CD4-positive, alpha-beta memory T cell (primary cell): ENCODE measurements at regions of chr7 and their contacts with region 1.

Region 1: DNA sequence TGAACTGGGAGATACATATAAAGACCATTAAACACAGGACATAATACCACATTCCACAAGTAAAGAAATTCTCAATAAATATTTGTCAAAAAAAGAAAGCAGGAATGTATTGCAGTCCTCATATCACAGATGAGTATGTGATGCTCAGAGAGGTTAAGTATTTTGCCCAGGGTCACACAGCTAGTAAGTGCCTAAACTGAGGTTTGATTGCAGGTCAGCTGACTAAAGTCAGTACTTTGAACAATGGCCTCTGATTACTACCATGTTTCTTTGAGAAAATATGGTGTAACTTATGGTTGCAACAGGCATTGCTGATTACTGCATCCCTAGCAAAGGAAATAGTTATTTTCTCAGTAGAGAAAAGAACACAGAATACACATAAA is 267.1 kb downstream of the ELMO1 start:
- DNase-seq: no peak
- H3K4me3 ChIP-seq: no peak overlapping the region
- H3K4me3 Mint-ChIP-seq: no peak overlapping the region
- H3K27ac ChIP-seq: no peak overlapping the region
- H3K27ac Mint-ChIP-seq: peak overlapping the region in 1 of 7 donors; percentile 47
- H3K4me1 ChIP-seq: no peaks in the 10 kb centered on the region
- H3K4me1 Mint-ChIP-seq: peaks cover 3 to 12% (median 6%) of the 10 kb centered on the region in 4 donors
- H3K27me3 ChIP-seq: no peaks in the 10 kb centered on the region
- H3K27me3 Mint-ChIP-seq: no peaks in the 10 kb centered on the region

Region 2: GRCh38 chr7:36473454-36474282 is 707.9 kb before region 1 on chr7:
- CTCF ChIA-PET with region 1: interaction called, 18 read pairs
- POLR2A ChIA-PET with region 1: no interaction called
- intact Hi-C with region 1: no loop called
- DNase-seq: no peak
- H3K4me3 ChIP-seq: no peak overlapping the region
- H3K4me3 Mint-ChIP-seq: no peak overlapping the region
- H3K27ac ChIP-seq: no peak overlapping the region
- H3K27ac Mint-ChIP-seq: no peak overlapping the region
- H3K4me1 ChIP-seq: peaks cover 5% of the 10 kb centered on the region
- H3K4me1 Mint-ChIP-seq: peaks cover 0 to 9% (median 3%) of the 10 kb centered on the region in 4 donors
- H3K27me3 ChIP-seq: no peaks in the 10 kb centered on the region
- H3K27me3 Mint-ChIP-seq: no peaks in the 10 kb centered on the region

Region 3: DNA sequence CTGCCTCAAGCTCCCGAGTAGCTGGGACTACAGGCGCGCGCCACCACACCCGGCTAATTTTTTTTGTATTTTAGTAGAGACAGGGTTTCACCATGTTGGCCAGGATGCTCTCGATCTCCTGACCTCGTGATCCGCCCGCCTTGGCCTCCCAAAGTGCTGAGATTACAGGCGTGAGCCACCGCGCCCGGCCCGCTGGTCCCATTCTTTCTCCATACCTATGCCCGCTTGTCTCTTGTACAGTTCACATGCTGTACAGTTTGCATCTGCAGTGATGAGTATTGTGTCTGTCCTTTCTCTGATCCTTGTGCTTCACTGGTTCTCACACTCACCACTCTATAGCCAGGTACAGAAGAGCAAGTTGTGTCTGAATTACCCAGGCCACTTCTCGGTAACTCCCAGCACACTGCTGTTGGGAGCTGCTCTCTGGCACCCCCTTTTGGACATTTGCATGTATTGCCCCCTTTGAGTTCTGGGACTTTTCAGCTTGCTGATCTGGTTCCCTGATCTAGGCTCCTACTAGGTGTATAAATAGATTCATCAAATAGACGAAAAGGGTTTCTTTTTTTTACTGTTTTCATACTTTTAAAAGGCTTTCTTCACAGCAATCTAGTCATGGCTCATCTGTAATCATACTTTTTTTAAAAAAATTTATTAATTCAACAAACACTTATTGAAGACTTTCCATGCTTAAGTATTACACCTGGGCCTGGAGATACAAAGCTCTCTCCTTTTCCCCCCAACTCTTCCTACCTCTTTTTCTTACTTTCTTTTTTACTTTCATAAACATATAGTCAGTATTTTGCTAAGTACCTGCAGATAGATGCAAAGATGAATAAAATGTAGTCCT is 510.7 kb before region 1 on chr7:
- CTCF ChIA-PET with region 1: interaction called, 44 read pairs
- POLR2A ChIA-PET with region 1: no interaction called
- intact Hi-C with region 1: loop called (anchors 1 kb)
- DNase-seq: peak; percentile 56 to 74 (median 73)
- H3K4me3 ChIP-seq: no peak overlapping the region
- H3K4me3 Mint-ChIP-seq: peak overlapping the region in 1 of 8 donors; percentile 50
- H3K27ac ChIP-seq: no peak overlapping the region
- H3K27ac Mint-ChIP-seq: peak overlapping the region in 4 of 7 donors; percentile 58 to 89 (median 78)
- H3K4me1 ChIP-seq: peaks cover 7% of the 10 kb centered on the region
- H3K4me1 Mint-ChIP-seq: peaks cover 4 to 8% (median 5%) of the 10 kb centered on the region in 4 donors
- H3K27me3 ChIP-seq: no peaks in the 10 kb centered on the region
- H3K27me3 Mint-ChIP-seq: peaks cover 2% of the 10 kb centered on the region in 2 donors

Region 4: DNA sequence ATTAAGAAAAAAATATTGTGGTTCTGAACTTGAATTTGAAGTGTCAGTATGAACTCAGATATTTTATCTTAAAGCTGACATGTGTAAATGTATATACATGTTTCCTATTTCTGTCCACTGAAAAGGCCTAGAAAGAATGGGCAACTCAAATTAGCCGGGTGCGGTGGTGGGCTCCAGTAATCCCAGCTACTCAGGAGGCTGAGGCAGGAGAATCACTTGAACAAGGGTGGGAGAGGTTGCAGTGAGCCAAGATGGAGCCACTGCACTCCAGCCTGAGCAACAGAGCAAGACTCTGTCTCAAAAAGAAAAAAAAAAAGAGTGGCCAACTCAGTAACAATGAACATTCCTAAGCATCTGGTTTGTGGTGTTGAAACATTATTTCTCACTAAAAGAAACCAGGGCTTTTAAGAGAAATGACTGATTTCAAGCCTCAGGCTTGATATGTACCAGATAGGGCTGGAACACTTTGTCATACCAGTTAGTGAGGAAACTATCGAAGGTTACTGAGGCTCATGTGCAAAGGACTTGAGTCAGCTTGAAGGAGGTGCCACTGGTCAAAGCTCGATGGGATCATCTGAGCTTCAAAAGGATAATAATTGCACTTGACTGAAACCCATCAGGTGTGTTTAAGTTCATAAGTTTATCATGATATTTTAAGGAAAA is 497.7 kb before region 1 on chr7:
- CTCF ChIA-PET with region 1: interaction called, 36 read pairs
- POLR2A ChIA-PET with region 1: interaction called, 5 read pairs
- intact Hi-C with region 1: loop called (anchors 2 kb)
- DNase-seq: no peak
- H3K4me3 ChIP-seq: no peak overlapping the region
- H3K4me3 Mint-ChIP-seq: no peak overlapping the region
- H3K27ac ChIP-seq: no peak overlapping the region
- H3K27ac Mint-ChIP-seq: peak overlapping the region in 1 of 7 donors; percentile 39
- H3K4me1 ChIP-seq: peaks cover 11% of the 10 kb centered on the region
- H3K4me1 Mint-ChIP-seq: peaks cover 15 to 26% (median 17%) of the 10 kb centered on the region in 4 donors
- H3K27me3 ChIP-seq: no peaks in the 10 kb centered on the region
- H3K27me3 Mint-ChIP-seq: no peaks in the 10 kb centered on the region

Region 5: DNA sequence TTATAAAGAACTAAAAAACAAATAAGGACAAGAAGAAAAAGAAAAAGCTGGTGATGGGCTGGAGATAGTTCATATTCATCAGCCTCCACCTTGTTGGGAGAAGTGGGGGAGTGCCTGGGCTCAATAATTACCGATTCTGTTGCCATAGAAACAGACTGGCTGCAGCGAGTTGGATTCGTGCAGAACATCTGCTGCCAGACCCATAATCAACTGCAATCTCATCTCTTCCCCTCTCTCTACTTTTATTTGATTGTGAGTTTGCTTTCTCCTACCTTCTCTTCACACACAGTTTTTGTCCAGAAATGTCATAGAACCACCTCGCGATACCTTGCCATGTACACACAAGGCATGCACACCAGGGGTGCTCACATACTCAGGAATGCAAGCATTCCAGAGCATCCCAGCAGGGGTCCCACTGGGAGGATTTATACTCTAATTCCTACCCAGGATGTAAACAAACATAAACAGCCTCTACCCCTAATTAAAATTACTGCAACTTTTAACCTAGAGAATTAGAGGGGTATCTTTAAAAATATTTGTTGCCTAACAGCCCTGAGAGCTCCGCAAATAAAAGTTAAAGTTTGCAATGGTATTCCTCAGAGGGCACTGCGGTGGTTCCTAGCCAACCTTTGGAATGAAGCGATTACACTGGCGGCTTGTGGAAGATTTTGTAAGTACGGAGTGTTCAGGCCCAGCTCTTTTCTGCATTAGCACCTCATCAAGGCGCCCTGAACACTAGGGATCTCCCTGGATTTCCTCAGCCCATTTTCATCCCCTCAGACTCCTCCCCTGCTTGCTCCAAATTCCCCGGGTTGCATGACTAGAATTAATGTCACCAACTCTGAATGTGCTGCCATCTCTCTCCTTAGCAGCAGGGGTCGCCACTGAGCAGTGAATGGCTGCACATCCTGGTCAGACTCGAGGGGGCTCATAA is 194.8 kb before region 1 on chr7:
- CTCF ChIA-PET with region 1: interaction called, 54 read pairs
- POLR2A ChIA-PET with region 1: no interaction called
- intact Hi-C with region 1: loop called (anchors 1 kb)
- DNase-seq: peak; percentile 30 to 50 (median 41)
- H3K4me3 ChIP-seq: no peak overlapping the region
- H3K4me3 Mint-ChIP-seq: no peak overlapping the region
- H3K27ac ChIP-seq: no peak overlapping the region
- H3K27ac Mint-ChIP-seq: peak overlapping the region in 3 of 7 donors; percentile 36 to 88 (median 82)
- H3K4me1 ChIP-seq: no peaks in the 10 kb centered on the region
- H3K4me1 Mint-ChIP-seq: peaks cover 25 to 43% (median 31%) of the 10 kb centered on the region in 4 donors
- H3K27me3 ChIP-seq: no peaks in the 10 kb centered on the region
- H3K27me3 Mint-ChIP-seq: no peaks in the 10 kb centered on the region

Region 6: DNA sequence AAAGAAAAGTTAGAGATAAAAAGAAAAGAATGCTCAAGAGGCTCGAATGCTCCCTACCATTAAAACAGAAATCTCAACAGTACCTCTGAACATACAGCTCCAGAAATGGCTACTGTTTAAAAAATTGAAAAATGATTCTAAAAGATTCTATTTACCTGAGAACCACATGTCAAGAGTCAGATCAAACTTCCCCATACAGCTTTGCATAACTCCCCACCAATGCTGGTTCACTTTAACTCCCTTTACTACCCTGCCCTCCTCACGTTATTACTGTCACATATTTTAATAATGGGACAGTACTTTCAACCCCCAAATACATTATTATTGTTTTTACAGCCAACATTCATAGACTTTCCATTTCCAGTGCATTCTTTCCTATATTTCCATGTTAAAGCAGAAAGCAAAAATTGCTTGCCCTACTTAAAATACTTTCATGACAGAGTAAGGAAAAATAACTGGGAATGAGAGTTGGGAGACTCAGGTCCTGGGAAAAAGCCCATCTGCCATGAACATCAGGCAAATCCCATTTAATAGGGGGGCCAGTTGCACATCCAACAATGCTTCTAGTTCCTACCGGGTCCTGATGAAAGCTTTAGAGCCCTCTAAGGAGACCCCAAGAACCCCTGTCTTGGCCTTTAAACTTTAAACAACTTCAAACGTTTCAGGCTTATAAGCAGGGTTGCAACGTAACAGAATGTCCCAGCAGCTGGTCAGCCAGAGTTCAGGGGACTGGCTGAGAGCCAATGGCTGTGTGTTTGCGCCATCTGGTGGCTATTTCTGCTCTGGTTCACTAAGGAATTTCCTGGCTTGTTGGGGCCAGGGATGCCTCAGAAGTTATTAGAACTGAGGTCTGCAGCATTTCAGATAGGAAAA is 19.7 kb after region 1 on chr7:
- CTCF ChIA-PET with region 1: interaction called, 80 read pairs
- POLR2A ChIA-PET with region 1: no interaction called
- intact Hi-C with region 1: no loop called
- DNase-seq: peak in 4 of 5 donors; percentile 10 to 28 (median 25)
- H3K4me3 ChIP-seq: no peak overlapping the region
- H3K4me3 Mint-ChIP-seq: no peak overlapping the region
- H3K27ac ChIP-seq: no peak overlapping the region
- H3K27ac Mint-ChIP-seq: peak overlapping the region in 3 of 7 donors; percentile 5 to 59 (median 22)
- H3K4me1 ChIP-seq: no peaks in the 10 kb centered on the region
- H3K4me1 Mint-ChIP-seq: peaks cover 4 to 12% (median 7%) of the 10 kb centered on the region in 4 donors
- H3K27me3 ChIP-seq: no peaks in the 10 kb centered on the region
- H3K27me3 Mint-ChIP-seq: no peaks in the 10 kb centered on the region

Region 7: DNA sequence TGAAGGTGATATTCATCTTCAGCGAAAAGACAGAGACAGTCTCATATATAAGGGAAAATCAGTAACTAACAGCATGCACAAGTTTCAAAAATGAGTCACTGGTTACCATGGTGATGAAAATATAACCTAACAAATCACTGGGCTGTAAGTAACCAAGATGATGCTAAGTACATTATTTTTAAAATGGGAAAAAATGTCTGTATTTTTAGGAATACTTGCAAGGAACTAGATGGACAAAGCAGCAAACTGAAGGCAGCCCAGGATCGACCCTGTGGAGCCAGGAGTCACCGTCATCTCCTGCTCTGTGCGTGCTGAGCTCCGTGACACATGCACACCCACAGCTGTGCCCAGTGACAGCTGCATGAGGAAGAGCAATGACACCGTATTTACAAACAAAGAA is 129.8 kb after region 1 on chr7:
- CTCF ChIA-PET with region 1: no interaction called
- POLR2A ChIA-PET with region 1: no interaction called
- intact Hi-C with region 1: no loop called
- DNase-seq: peak; percentile 47 to 66 (median 61)
- H3K4me3 ChIP-seq: no peak overlapping the region
- H3K4me3 Mint-ChIP-seq: peak overlapping the region in 7 of 8 donors; percentile 44 to 87 (median 75)
- H3K27ac ChIP-seq: peak overlapping the region; percentile 54
- H3K27ac Mint-ChIP-seq: peak overlapping the region; percentile 95 to 99 (median 98)
- H3K4me1 ChIP-seq: peaks cover 53% of the 10 kb centered on the region
- H3K4me1 Mint-ChIP-seq: peaks cover 57 to 89% (median 71%) of the 10 kb centered on the region in 4 donors
- H3K27me3 ChIP-seq: no peaks in the 10 kb centered on the region
- H3K27me3 Mint-ChIP-seq: no peaks in the 10 kb centered on the region

Region 8: GRCh38 chr7:38492010-38492409 is 1310.5 kb after region 1 on chr7:
- CTCF ChIA-PET with region 1: no interaction called
- POLR2A ChIA-PET with region 1: no interaction called
- intact Hi-C with region 1: no loop called
- DNase-seq: no peak
- H3K4me3 ChIP-seq: no peak overlapping the region
- H3K4me3 Mint-ChIP-seq: no peak overlapping the region
- H3K27ac ChIP-seq: no peak overlapping the region
- H3K27ac Mint-ChIP-seq: peak overlapping the region in 1 of 7 donors; percentile 3
- H3K4me1 ChIP-seq: no peaks in the 10 kb centered on the region
- H3K4me1 Mint-ChIP-seq: no peaks in the 10 kb centered on the region
- H3K27me3 ChIP-seq: no peaks in the 10 kb centered on the region
- H3K27me3 Mint-ChIP-seq: peaks cover 0 to 13% of the 10 kb centered on the region in 2 donors